ACHN (cell line): ENCODE measurements at regions of chr10 and their contacts with region 1.

Region 1: DNA sequence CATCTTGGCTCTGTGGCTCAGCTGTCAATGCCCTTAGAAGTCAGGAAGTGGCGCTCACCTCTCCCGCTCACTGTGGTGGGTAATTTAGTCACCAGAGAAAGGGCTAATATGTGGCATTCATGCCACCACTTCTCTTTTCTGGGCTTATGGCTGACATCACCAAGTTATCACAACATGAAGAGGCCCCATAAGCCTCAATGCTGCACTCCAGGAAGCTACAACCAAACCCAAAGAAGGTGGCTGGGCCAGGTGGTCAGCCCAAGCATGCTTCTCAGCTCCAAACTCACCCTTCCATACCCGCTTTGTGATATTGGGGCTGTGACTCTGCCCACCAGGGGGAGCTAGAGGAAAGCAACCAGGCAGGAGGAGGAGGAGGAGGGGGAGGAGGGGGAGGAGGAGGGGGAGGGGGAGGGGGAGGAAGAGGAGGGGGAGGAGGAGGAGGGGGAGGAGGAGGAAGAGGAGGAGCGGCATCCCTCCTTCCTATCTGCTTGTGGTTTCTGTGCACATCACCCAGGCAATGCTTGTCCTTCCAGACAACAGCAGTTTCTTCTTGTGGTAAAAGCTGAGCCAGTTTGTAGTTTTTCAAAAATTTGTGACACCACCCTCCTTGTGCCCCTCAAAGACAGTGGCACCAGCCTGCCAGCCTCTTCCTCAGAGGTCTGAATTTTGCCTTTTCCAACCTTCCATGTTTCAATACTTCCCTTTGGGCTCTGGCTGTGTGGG is 42.1 kb downstream of the CYP26A1 start:
- DNase-seq: peak; percentile 68

Region 2: DNA sequence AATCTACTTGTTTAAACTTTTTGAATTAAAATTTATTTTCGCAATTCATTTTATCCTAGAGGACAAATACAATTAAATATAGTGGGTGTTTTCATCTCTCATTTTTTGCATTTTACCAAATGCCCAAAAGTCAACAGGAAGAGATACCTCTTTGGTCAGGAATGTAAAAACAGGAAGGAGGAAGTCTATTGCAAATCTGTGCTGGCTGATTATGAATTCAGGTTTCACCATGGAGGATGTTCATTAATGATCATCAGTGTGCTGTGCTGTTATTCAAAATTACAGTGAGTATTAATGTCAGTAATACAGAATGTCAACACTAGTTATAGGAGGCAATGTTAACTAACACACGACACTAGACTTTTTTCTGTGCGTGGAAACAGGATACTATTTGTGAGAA is 242.8 kb before region 1 on chr10:
- in situ Hi-C with region 1: no loop called
- DNase-seq: no peak

Region 3: GRCh38 chr10:93006435-93007039 is 109.3 kb before region 1 on chr10:
- in situ Hi-C with region 1: no loop called
- DNase-seq: peak; percentile 61

Region 4: GRCh38 chr10:93288654-93289634 is 173.1 kb after region 1 on chr10:
- in situ Hi-C with region 1: loop called (anchors 25 kb)
- DNase-seq: peak; percentile 91